AG04449 (cell line): ENCODE measurements at regions of chr15 and their contacts with region 1.

Region 1: DNA sequence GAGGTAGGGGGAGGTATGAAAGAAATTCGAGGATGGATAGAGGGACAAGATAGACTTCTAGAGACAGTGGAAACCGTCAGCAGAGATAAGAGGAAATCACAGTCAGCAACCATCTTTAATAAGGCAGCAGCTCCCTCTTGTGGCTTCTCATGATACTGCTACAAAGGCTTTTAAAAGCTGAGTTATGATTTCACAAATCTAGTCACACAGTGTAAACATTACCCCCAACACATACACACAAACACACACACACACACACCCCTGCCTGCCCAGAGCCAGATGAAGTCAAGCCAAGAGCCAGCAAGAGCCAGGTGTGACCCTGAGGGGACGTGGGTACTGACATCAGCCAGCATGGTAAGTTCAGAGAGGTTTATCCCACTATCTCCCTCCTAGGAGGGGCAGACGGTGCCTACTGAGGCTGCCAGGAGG is 18.9 kb upstream of the TGM5 start:
- DNase-seq: peak; percentile 17
- H3K4me3 ChIP-seq: no peak overlapping the region
- CTCF ChIP-seq: peak; percentile 76

Region 2: GRCh38 chr15:42819786-42820185 is 465.8 kb before region 1 on chr15:
- CTCF ChIA-PET with region 1: no interaction called
- POLR2A ChIA-PET with region 1: no interaction called
- DNase-seq: no peak
- H3K4me3 ChIP-seq: no peak overlapping the region
- CTCF ChIP-seq: no peak

Region 3: GRCh38 chr15:43185157-43186017 is 100.2 kb before region 1 on chr15 and contains the start of gene CCNDBP1:
- CTCF ChIA-PET with region 1: interaction called, 63 read pairs
- POLR2A ChIA-PET with region 1: no interaction called
- DNase-seq: no peak
- H3K4me3 ChIP-seq: peak within 1 kb of the TSS; percentile 73
- CTCF ChIP-seq: peak; percentile 47

Region 4: GRCh38 chr15:43204016-43204901 is 81.4 kb before region 1 on chr15:
- CTCF ChIA-PET with region 1: interaction called, 84 read pairs
- POLR2A ChIA-PET with region 1: no interaction called
- DNase-seq: no peak
- H3K4me3 ChIP-seq: no peak overlapping the region
- CTCF ChIP-seq: peak; percentile 79

Region 5: DNA sequence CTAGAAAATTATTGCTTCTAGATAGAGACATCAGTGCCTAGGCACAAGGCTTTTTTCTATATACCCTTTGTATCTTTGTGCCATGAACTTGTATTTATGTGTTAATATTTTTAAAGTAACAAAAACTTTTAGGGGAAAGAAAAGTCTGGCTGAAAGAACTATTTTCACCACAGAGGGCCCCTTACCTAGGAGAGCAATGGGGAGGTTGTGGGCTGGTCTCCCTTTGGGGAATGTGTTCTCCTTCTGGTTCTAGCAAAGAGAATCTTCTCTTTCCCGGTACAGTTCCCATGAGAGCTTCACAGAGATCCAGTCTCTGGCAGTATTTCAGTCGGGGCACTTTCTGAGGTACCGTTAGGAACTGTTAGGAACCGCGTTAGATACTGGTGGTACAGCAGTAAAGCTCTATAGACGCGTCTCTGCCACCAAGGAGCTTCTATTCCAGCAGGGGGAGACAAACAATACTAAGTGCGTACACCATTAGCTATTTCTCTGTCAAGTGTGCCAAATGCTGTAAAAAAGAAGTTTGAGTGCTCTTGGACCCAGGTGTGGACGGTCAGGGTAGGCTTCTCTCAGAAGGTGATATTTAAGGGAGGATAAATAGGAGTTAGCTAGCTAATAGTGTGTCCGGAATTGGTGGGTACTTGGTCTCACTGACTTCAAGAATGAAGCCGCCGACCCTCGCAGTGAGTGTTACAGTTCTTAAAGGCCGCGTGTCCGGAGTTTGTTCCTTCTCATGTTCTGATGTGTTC is 60.2 kb before region 1 on chr15:
- CTCF ChIA-PET with region 1: interaction called, 434 read pairs
- POLR2A ChIA-PET with region 1: no interaction called
- DNase-seq: no peak
- H3K4me3 ChIP-seq: no peak overlapping the region
- CTCF ChIP-seq: peak; percentile 71

Region 6: DNA sequence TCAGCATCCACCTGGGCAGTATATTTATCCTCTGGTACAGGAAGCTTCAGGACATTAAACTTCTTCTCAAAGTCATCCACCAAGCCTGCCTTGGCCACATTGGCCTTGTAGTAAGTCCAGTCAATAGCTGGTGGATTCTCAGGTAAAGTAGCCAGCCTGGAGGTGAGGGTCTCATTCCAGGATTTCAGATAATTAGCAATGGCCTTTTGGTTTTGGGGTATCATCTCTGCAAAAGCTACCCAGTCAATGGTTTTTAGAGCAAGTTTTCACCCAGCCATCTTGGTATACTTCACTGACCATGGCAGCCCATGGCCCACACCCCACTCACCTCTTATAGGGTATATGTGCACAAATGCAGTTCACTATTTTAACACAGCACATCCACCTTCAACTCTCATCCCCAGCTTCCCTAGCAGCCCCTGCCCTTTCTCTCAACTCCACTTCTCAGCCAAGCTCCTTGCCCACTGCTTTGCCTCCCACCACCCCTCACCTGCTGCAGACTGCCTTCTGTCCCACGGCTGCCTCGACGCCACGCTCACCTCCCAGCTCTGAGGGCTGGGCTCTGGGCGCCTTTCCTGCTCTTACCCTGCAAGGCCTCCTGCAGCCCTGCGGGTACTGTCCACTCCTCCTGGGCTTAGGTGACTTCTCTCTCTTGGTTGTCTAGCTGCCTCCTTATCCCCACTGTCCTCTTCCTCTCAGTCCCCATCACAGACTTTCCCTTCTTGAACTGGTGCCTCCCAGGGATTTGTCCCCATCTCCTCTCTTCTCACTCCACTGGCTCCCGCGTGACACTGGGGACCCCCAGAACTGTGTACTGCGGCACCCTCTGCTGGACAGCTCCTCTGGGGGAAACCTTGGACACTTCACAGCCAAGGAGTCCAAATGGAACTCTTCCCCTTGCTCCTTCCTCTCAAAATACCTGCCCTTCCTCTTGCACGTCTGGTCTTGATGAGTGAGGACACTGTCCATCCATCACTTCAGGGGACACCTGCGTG is 17.2 kb before region 1 on chr15:
- CTCF ChIA-PET with region 1: interaction called, 74 read pairs
- POLR2A ChIA-PET with region 1: no interaction called
- DNase-seq: no peak
- H3K4me3 ChIP-seq: no peak overlapping the region
- CTCF ChIP-seq: peak; percentile 26